ENCODE measurements at regions of chr1 and their contacts with region 1.

Region 1: DNA sequence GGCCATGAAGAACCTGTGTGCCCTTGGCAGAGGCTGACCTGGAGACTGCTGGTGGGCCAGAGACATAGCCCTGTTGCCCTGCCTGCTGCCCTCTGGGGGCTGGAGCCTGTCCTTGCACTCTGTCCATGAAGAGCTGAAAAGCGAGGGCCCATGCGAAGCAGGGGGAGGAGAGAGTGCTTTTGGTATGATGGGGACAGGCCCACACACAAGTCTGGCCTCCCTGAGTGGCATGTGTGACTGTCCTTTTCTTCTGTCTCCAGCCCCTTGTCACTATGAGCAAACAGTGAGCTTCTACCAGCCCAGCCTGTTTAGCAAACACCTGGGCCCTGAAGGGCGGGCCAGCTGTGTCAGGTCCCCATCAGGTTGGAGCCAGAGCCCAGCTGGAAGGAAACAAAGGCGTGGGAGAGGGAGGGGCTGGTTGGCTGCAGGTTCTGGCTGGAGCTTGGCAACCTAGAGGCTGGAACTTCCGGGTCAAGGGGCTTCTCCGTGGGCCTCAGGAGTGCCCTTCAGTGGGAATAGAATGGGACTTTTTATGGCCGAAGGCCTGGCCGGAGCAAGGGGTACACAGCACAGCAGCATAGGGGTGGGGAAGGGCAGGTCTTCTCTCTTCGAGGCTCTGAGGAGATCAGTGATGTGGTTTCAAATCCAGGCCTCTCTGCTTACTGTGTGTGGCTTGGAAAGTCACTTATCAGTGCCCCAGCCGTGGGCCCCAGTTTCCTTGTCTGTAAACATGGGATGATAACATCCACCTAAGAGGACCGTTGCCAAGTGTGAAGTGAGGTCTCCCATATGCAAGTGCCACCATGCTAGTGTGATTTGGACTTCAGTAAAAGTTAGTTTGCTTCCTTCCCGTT is 14.3 kb downstream of the QSOX1 start:
- DNase-seq: peak; percentile 54
- ATAC-seq: peak; percentile 87
- H3K4me3 Mint-ChIP-seq: no peak overlapping the region
- H3K27ac Mint-ChIP-seq: no peak overlapping the region
- H3K4me1 Mint-ChIP-seq: peaks cover 3% of the 10 kb centered on the region
- H3K27me3 Mint-ChIP-seq: no peaks in the 10 kb centered on the region

Region 2: GRCh38 chr1:180112984-180113647 is 55.9 kb before region 1 on chr1:
- CTCF ChIA-PET with region 1: no interaction called
- POLR2A ChIA-PET with region 1: no interaction called
- DNase-seq: no peak
- ATAC-seq: no peak
- H3K4me3 Mint-ChIP-seq: no peak overlapping the region
- H3K27ac Mint-ChIP-seq: no peak overlapping the region
- H3K4me1 Mint-ChIP-seq: peaks cover 3% of the 10 kb centered on the region
- H3K27me3 Mint-ChIP-seq: no peaks in the 10 kb centered on the region

Region 3: GRCh38 chr1:180154325-180155181 is 14.5 kb before region 1 on chr1 and contains the start of gene QSOX1:
- CTCF ChIA-PET with region 1: interaction called, 22 read pairs
- POLR2A ChIA-PET with region 1: interaction called, 5 read pairs
- DNase-seq: peak; percentile 90
- ATAC-seq: peak; percentile 94
- H3K4me3 Mint-ChIP-seq: peak within 1 kb of the TSS; percentile 92
- H3K27ac Mint-ChIP-seq: peak within 1 kb of the TSS; percentile 92
- H3K4me1 Mint-ChIP-seq: peaks cover 38% of the 10 kb centered on the region
- H3K27me3 Mint-ChIP-seq: no peaks in the 10 kb centered on the region
- total RNA-seq, gene QSOX1: 23.9 to 25.2 TPM